Common myeloid progenitor, CD34-positive (primary cell): ENCODE measurements at regions of chr9 and their contacts with region 1.

Region 1: DNA sequence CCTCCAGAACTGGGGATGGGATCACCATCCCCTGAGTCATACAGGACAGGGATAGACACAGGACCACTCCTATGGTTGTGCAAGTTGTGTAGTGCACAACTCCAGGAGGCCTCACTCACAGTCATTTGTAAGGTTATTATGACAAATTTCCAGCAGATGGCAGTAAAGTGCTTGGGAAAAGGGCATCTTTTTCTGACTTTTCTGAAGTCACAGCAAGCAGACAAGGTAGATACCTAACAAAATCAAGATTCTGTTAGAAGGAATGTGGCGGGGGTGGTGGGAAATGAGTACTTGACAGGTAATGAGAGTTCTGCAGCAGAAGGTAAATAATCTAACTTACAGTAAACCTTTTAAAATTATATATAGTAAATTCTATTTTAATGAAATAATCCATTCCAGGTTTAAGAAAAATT is 16.7 kb upstream of the KIF27 start:
- DNase-seq: peak; percentile 61 to 79 (median 75)
- H3K4me3 ChIP-seq: no peak overlapping the region
- H3K27ac ChIP-seq: no peak overlapping the region
- H3K4me1 ChIP-seq: peaks cover 5 to 24% (median 16%) of the 10 kb centered on the region in 4 experiments
- H3K27me3 ChIP-seq: no peaks in the 10 kb centered on the region

Region 2: DNA sequence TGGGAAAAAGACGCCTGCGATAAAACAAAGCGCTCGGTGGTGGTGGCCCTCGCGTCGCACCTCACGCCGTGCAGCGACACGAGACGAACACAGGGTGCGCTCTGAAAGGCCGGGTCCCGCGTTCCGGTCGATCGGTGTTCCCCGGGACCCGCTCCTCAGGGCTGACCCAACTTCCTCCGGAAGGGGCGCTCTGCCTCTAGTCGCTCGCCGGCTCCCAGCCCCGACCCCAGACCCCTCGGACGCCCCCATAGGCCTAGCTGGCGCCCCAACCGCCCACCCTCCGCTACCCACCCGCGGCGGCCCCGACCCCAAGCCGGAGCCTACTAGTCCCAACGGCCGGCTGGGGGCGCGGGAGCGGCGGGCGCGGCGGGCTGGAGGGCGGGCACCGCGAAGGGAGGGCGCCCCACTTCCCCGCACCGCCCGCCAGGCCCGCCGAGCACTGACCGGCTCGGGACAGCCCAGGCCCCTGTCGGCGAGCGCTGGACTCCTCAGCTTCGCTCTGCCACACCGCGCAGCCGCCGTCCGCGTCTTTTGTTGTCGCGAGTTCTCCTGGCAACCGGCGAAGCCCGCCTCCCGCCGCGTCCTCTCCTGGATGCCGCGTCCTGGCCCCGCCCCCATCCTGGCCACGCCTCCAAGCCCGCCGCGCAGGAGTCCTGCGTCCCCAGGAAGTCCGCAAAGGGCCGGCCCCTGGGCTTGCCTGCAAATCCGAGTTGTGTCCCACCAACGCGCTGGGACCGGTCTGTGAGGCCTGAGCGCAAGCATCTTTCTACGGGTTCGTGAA is 16.8 kb before region 1 on chr9 and contains the start of gene KIF27:
- CTCF ChIA-PET with region 1: interaction called, 10 read pairs
- POLR2A ChIA-PET with region 1: no interaction called
- DNase-seq: peak; percentile 94 to 97 (median 97)
- H3K4me3 ChIP-seq: peak within 1 kb of the TSS; percentile 53 to 76 (median 67)
- H3K27ac ChIP-seq: peak within 1 kb of the TSS; percentile 86 to 93
- H3K4me1 ChIP-seq: peaks cover 7 to 13% (median 10%) of the 10 kb centered on the region in 4 experiments
- H3K27me3 ChIP-seq: no peaks in the 10 kb centered on the region

Region 3: DNA sequence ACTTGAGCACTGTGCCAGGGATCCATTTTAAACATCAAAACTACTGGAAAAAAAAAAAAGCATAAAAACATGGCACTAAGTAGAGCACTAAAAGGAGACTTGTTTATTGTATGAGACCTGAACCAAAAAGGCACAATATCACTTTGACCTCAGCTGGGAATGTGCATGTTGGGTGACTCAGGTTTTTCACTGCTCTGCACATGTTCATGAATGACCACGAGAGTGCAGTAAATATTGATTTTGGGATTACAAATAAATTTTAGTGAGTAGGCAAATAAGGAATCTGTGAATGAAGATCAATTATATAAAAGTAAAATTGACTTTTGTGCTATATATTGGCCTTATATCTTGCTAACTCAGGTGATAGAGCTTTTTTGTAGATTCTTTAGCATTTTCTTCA is 54.5 kb after region 1 on chr9:
- CTCF ChIA-PET with region 1: no interaction called
- POLR2A ChIA-PET with region 1: no interaction called
- DNase-seq: no peak
- H3K4me3 ChIP-seq: no peak overlapping the region
- H3K27ac ChIP-seq: no peak overlapping the region
- H3K4me1 ChIP-seq: no peaks in the 10 kb centered on the region
- H3K27me3 ChIP-seq: no peaks in the 10 kb centered on the region

Region 4: GRCh38 chr9:84261082-84261746 is 323.3 kb after region 1 on chr9:
- CTCF ChIA-PET with region 1: interaction called, 23 read pairs
- POLR2A ChIA-PET with region 1: no interaction called
- DNase-seq: peak; percentile 56 to 69 (median 62)
- H3K4me3 ChIP-seq: peak overlapping the region in 1 of 7 experiments; percentile 36
- H3K27ac ChIP-seq: no peak overlapping the region
- H3K4me1 ChIP-seq: peaks cover 0 to 10% (median 2%) of the 10 kb centered on the region in 4 experiments
- H3K27me3 ChIP-seq: peaks cover 0 to 7% (median 0%) of the 10 kb centered on the region in 5 experiments

Region 5: GRCh38 chr9:84315278-84315877 is 377.5 kb after region 1 on chr9:
- CTCF ChIA-PET with region 1: interaction called, 12 read pairs
- POLR2A ChIA-PET with region 1: no interaction called
- DNase-seq: peak; percentile 52 to 77 (median 65)
- H3K4me3 ChIP-seq: peak overlapping the region in 1 of 7 experiments; percentile 14
- H3K27ac ChIP-seq: no peak overlapping the region
- H3K4me1 ChIP-seq: peaks cover 0 to 3% (median 0%) of the 10 kb centered on the region in 4 experiments
- H3K27me3 ChIP-seq: no peaks in the 10 kb centered on the region